Transverse colon (tissue), 4 donors: ENCODE measurements at regions of chr10 and their contacts with region 1.

Region 1: DNA sequence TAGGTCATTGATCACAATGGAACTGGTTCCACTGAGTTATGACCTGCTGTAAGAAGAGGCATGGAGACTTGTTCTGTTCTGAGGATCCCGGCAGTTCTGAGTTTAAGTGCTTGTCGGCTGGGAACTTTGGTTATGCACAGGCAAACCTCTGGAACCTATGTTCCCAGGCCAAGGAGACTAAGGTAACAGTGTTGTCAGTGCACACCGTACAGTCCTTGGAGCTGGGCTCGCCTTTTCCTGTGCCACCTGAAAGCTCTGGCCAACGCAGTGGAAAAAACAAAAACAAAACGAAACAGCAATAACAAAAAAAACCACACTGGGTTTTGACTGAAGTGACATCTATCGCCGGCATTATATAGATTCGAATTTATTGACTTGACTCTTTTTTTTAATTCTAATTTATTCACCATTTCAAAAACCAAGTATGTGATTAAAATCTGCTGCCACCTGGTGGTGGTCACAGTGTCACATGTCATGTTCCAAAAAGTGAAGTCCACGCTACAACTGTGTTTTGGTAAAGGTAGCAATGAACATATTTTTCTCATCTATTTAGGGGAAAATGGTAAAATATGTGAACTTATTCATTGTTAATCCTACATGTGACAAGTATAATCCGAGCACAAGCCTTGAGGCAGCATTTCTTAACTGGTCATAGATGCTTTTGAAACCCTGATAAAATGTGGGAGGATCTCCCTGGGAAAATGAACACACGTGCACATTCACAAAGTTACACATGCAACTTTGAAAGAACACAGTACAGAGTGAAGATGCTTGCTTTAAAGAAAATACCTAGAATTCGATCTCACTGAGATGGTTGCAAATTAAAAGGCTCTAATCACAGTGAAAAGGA is 113.8 kb upstream of the PPP2R2D start:
- DNase-seq: no peak
- H3K4me3 ChIP-seq: no peak overlapping the region
- H3K27ac ChIP-seq: no peak overlapping the region
- H3K4me1 ChIP-seq: no peaks in the 10 kb centered on the region
- H3K27me3 ChIP-seq: no peaks in the 10 kb centered on the region
- CTCF ChIP-seq: peak; percentile 53 to 64 (median 58)
- EP300 ChIP-seq: no peak
- POLR2A ChIP-seq: no peak

Region 2: DNA sequence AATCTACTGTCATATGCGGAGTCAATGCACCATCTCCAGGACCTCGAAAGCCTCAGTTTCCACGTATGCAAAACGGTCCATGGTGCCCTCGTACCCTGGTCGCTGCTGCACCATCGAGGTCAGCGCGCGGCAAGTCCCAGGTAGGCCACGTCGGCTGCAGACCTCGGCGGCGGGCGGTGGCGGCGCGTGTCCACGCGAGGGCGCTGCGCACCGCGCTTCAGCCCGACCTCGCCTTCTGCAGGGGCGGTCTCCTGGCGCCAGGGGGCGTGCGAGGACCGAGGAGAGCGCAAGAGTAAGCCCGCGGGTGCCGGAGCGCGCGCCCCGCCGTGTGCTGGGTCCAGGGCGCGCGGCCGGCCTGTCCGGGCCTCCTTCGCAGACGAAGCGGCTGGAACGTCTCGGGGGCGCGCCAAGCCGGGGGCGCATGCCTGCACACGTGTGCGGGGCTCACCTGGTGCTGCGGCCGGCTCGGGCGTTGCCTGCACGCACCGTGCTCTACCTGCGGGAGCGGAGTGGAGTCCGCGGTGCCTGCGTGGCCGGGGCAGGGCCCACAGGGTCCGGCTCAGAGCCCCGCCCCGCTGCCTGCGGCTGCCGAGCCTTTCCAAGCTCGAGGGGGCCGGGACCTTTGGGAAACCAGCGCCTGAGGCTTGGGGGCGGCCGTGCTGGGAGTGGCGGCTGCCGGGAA is 1596.8 kb before region 1 on chr10:
- in situ Hi-C with region 1: loop called in 2 of 4 experiments (anchors 25 kb)
- intact Hi-C with region 1: loop called (anchors 5 kb)
- DNase-seq: peak; percentile 91
- H3K4me3 ChIP-seq: peak overlapping the region; percentile 42 to 67 (median 60)
- H3K27ac ChIP-seq: peak overlapping the region in 1 of 4 donors; percentile 42
- H3K4me1 ChIP-seq: peaks cover 6 to 9% (median 6%) of the 10 kb centered on the region in 4 donors
- H3K27me3 ChIP-seq: peaks cover 8% of the 10 kb centered on the region
- CTCF ChIP-seq: peak in 4 of 5 experiments; percentile 81 to 100 (median 98)
- EP300 ChIP-seq: no peak
- POLR2A ChIP-seq: no peak

Region 3: DNA sequence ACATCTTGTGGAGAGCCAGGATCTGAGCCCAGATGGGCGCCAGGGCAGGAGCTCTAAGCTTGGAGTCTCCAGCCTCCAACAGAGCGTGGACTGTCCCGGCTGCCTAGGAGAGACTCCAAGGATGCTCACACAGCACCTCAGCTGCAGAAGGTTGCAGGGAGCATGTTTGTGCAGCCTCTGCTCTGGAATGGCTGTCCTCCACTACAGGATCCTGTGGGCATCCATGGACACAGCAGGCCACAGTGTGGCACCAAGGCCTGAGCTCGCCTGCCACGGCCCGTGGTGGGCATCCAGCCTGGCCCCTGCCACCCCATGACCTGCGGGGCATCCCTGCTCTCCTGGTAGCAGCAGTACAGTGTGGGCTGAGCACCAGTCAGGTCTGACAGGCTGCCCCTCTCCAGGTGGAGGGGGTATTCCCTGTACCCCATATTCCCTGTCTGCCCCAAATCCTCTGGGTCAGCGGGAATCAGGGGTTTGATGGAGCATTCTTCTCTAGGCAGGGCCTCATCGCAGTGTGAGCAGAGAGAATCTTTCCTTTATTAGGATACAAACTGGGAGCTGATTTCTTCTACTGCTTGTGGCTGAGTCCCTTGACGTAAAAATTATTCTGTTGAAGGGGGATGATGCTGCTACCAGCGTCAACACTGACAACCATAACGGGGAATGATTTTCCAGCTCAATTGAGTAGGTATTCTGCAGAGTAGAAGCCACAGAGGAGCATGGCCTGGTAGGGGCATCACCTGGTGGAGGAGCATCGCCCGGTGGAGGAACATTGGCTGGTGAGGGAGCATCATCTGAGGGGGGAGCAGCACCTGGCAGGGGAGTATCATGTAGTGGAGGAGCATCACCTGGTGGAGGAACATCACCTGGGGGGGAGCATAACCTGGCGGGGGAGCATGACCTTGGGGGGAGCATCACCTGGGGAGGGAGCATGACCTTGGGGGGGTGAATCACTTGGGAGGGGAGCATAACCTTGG is 1590.2 kb before region 1 on chr10:
- in situ Hi-C with region 1: loop called in 2 of 4 experiments (anchors 25 kb)
- intact Hi-C with region 1: loop called (anchors 5 kb)
- DNase-seq: no peak
- H3K4me3 ChIP-seq: no peak overlapping the region
- H3K27ac ChIP-seq: no peak overlapping the region
- H3K4me1 ChIP-seq: no peaks in the 10 kb centered on the region
- H3K27me3 ChIP-seq: peaks cover 7% of the 10 kb centered on the region
- CTCF ChIP-seq: no peak
- EP300 ChIP-seq: no peak
- POLR2A ChIP-seq: no peak

Region 4: DNA sequence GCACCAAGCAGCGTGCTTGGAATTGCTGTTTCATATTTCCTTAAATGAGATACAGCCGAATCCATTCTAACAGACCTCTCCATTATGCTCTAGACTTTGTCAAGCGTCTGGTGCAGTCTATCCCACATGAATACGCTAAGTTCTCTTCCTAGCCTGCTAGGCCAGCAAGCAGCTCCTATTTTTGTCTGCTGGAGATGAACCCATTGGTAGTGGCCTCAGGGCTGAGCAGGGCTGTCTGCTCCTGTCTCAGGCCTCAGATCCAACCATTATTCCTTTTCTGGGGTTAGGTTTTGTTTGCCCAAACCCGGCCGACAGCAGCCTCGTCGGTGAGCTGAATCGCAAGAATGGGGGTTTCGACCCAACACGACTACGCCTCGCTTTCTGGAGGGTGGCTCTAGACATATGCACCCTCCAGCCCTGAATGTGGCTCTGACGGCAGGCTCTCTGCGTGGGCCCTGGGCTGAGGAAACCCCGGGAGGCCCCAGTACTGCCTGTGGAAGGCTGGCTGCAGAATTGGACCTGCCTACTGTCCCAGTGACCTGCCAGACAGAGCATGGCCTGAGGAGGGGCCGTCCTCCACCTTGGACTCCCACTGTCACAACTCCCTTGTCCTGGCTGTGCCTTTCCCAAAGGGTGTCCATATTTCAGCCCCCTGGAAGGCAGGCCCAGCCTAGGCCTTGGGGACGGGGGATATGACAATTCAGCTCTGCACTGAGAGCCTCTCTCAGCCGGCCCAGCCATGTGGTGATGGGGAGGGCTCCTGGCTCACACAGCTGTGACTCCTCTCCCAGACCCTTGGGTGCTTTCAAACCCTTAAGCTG is 207.5 kb before region 1 on chr10:
- in situ Hi-C with region 1: no loop called
- intact Hi-C with region 1: no loop called
- DNase-seq: no peak
- H3K4me3 ChIP-seq: no peak overlapping the region
- H3K27ac ChIP-seq: no peak overlapping the region
- H3K4me1 ChIP-seq: no peaks in the 10 kb centered on the region
- H3K27me3 ChIP-seq: no peaks in the 10 kb centered on the region
- CTCF ChIP-seq: no peak
- EP300 ChIP-seq: no peak
- POLR2A ChIP-seq: no peak